Activated T-helper 2 cell treated with anti-CD3 and anti-CD28 coated beads, Interferon-gamma antibody, Interleukin-2, Interleukin-4, amounts not matched to agents 10 μg/mL and 5 μg/mL and 100 μg/mL, durations not matched to agents 14 hours and 24 hours and 36 hours (primary cell): ENCODE measurements at regions of chrX and their contacts with region 1.

Region 1: GRCh38 chrX:150772150-150772970 is 79.2 kb downstream of the MTMR1 start:
- DNase-seq: peak; percentile 56
- H3K4me3 Mint-ChIP-seq: no peak overlapping the region
- H3K27ac Mint-ChIP-seq: no peak overlapping the region
- H3K4me1 Mint-ChIP-seq: peaks cover 2% of the 10 kb centered on the region
- H3K27me3 Mint-ChIP-seq: no peaks in the 10 kb centered on the region

Region 2: GRCh38 chrX:150982788-150983520 is 210.6 kb after region 1 on chrX and contains the start of gene HMGB3:
- intact Hi-C with region 1: loop called (anchors 5 kb)
- DNase-seq: peak; percentile 81
- H3K4me3 Mint-ChIP-seq: peak within 1 kb of the TSS; percentile 63
- H3K27ac Mint-ChIP-seq: no peak within 1 kb of the TSS
- H3K4me1 Mint-ChIP-seq: peaks cover 16% of the 10 kb centered on the region
- H3K27me3 Mint-ChIP-seq: no peaks in the 10 kb centered on the region
- total RNA-seq, gene HMGB3: 52.6 and 60.8 TPM in 2 replicates

Region 3: DNA sequence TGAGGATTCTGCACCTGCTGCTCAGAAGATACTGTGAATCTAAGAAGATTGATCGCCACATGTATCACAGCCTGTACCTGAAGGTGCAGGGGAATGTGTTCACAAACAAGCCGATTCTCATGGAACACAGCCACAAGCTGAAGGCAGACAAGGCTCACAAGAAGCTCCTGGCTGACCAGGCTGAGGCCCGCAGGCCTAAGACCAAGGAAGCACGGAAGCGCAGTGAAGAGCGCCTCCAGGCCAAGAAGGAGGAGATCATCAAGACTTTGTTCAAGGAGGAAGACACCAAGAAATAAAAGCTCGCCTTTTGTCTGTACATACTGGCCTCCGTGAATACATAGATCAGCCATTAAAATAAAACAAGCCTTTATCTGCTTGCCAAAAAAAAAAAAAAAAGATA is 221.4 kb after region 1 on chrX:
- intact Hi-C with region 1: no loop called
- DNase-seq: no peak
- H3K4me3 Mint-ChIP-seq: no peak overlapping the region
- H3K27ac Mint-ChIP-seq: no peak overlapping the region
- H3K4me1 Mint-ChIP-seq: no peaks in the 10 kb centered on the region
- H3K27me3 Mint-ChIP-seq: no peaks in the 10 kb centered on the region

Region 4: DNA sequence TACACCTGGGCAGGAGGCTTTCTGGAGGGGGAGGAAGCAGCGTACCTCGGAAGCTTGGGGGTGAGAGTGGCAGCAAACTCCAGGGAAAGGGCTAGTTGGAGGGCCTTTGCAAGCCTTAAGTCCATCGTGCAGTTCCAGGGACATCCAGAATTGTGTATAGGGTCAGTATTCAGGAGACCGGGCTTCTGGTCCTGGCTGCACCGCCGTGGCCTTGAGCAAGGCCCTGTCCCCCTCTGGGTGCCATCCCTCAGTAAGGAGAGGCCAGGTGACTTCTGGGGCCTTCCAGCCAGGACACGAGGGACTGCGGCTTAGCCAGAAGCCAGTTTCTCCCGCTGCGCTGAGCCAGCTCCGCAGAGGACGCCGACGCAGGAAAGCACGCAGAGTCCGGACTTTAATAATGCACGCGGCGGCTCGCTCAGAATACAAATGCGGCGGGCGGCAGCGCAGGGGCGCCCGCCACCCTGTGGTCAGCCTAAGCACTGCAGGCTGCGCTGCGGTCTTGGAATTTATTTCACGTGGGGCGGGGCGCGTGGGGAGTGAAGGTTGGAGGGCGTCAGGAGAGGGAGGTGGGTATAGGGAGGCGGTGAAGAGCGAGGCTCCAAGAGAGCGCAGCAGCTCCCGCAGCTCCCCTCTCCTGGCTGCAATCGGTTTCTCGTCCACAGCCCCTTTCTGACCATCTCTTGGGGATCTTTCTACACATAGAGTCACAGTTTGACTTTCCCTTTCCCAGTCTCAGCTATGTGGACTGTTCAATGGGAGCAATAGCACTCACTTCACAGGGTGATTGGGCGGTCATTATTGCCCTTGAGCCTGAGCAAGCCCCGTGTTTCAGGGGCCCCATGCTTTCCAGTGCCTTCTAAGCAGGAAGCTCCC is 310.0 kb after region 1 on chrX:
- intact Hi-C with region 1: loop called (anchors 1 kb)
- DNase-seq: peak; percentile 39
- H3K4me3 Mint-ChIP-seq: no peak overlapping the region
- H3K27ac Mint-ChIP-seq: no peak overlapping the region
- H3K4me1 Mint-ChIP-seq: no peaks in the 10 kb centered on the region
- H3K27me3 Mint-ChIP-seq: peaks cover 22% of the 10 kb centered on the region

Region 5: GRCh38 chrX:151697522-151697921 is 925.2 kb after region 1 on chrX:
- intact Hi-C with region 1: loop called (anchors 5 kb)
- DNase-seq: no peak
- H3K4me3 Mint-ChIP-seq: no peak overlapping the region
- H3K27ac Mint-ChIP-seq: no peak overlapping the region
- H3K4me1 Mint-ChIP-seq: no peaks in the 10 kb centered on the region
- H3K27me3 Mint-ChIP-seq: peaks cover 7% of the 10 kb centered on the region